ENCODE measurements at regions of chr3 and their contacts with region 1.

Region 1: GRCh38 chr3:186425788-186426730 is 64.0 kb upstream of the DGKG start:
- DNase-seq: peak; percentile 81
- ATAC-seq: peak; percentile 89
- H3K4me3 ChIP-seq: no peak overlapping the region
- H3K27ac ChIP-seq: peak overlapping the region; percentile 60
- H3K4me1 ChIP-seq: peaks cover 30% of the 10 kb centered on the region
- H3K27me3 ChIP-seq: no peaks in the 10 kb centered on the region
- CTCF ChIP-seq: peak; percentile 62

Region 2: GRCh38 chr3:184619369-184619768 is 1806.7 kb before region 1 on chr3:
- CTCF ChIA-PET with region 1: no interaction called
- POLR2A ChIA-PET with region 1: no interaction called
- intact Hi-C with region 1: no loop called
- DNase-seq: no peak
- ATAC-seq: no peak
- H3K4me3 ChIP-seq: no peak overlapping the region
- H3K27ac ChIP-seq: no peak overlapping the region
- H3K4me1 ChIP-seq: peaks cover 6% of the 10 kb centered on the region
- H3K27me3 ChIP-seq: peaks cover 7% of the 10 kb centered on the region
- CTCF ChIP-seq: no peak

Region 3: DNA sequence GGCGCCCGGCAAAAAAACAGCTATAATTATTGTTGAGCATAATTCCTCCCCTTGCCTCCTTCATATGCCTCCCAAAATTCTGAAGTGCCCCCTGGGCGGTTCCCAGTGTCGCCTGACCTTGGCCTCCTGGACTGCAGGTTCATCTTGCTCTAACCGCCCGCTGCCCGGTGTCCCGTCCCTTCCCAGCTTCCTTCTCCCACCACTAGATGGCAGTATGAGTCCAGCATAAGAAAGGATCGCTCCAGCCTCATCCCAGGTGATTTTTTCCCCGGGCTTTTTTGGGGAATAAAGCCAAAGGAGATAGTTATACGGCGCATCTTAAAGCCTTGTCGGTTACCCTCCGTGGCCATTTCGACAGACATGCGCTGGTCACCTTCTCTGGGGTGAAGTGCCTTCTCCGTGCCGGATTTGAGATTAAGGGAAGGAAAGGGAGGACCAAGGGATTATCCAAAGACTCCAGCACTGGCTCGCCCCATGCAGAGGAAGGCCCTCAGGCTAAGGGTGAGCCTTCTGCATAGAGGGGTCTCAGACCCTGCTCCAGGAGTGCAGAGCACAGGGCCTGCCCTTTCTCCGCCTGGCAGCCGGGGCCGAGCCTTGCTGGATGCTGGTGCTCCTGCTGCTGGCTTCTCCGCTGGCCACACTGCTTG is 442.4 kb before region 1 on chr3:
- CTCF ChIA-PET with region 1: no interaction called
- POLR2A ChIA-PET with region 1: no interaction called
- intact Hi-C with region 1: no loop called
- DNase-seq: peak; percentile 89
- ATAC-seq: peak; percentile 99
- H3K4me3 ChIP-seq: peak overlapping the region; percentile 48
- H3K27ac ChIP-seq: no peak overlapping the region
- H3K4me1 ChIP-seq: peaks cover 14% of the 10 kb centered on the region
- H3K27me3 ChIP-seq: no peaks in the 10 kb centered on the region
- CTCF ChIP-seq: peak; percentile 97

Region 4: GRCh38 chr3:186277268-186277909 is 148.7 kb before region 1 on chr3:
- CTCF ChIA-PET with region 1: interaction called, 12 read pairs
- POLR2A ChIA-PET with region 1: no interaction called
- intact Hi-C with region 1: no loop called
- DNase-seq: peak; percentile 56
- ATAC-seq: peak; percentile 66
- H3K4me3 ChIP-seq: no peak overlapping the region
- H3K27ac ChIP-seq: no peak overlapping the region
- H3K4me1 ChIP-seq: peaks cover 17% of the 10 kb centered on the region
- H3K27me3 ChIP-seq: no peaks in the 10 kb centered on the region
- CTCF ChIP-seq: peak; percentile 57

Region 5: DNA sequence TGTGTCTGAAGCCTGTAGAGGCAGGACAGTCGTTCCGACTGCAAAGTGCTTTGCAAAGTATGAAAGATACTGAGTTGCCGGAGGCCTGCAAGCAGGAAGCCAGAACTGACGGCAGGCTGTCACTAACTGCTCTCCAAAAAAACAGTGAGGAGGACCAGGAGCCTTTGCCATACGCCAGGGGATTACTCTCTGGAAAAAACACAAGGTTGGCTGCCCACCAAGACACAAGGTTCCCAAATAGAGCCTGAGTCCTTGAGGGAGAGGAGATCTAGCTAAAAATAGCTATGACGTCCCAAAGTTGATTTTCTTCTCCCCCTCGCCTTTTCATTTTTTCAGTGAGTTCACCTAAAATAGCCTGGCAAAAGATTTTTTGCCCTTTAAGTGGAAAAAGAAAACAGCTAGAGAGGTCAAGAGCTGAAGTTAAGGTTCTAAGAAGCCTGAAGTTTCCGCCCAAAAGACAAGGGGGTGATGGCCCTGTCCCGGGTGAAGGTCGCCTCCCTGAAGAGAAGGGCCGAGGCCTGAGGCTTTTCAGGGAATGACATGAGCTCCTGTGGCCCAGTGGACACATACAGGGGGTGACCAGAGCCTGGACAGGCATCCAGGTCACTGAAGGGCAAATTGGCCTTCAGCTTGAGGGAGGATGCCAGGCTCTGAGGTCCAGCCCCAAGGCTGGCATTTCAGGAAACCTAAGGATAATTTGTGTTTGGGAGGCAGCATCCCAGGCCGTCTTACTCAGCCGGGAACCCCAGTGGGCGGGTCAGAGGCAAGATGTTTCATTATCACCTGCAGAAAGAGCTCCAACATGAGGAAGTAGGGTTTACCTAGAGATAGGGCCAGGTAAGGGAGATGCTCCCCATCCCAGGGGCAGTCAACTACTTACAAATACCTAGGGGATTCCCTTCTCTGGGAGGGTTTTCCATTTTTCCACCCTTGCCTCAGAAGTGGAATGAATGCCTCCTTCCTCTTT is 19.1 kb before region 1 on chr3:
- CTCF ChIA-PET with region 1: no interaction called
- POLR2A ChIA-PET with region 1: no interaction called
- intact Hi-C with region 1: no loop called
- DNase-seq: no peak
- ATAC-seq: no peak
- H3K4me3 ChIP-seq: no peak overlapping the region
- H3K27ac ChIP-seq: no peak overlapping the region
- H3K4me1 ChIP-seq: peaks cover 6% of the 10 kb centered on the region; the same call in 1 of the 2 replicates
- H3K27me3 ChIP-seq: no peaks in the 10 kb centered on the region
- CTCF ChIP-seq: no peak

Region 6: GRCh38 chr3:186452517-186452916 is 26.5 kb after region 1 on chr3:
- CTCF ChIA-PET with region 1: no interaction called
- POLR2A ChIA-PET with region 1: no interaction called
- intact Hi-C with region 1: loop called (anchors 2 kb)
- DNase-seq: peak; percentile 95
- ATAC-seq: peak; percentile 95
- H3K4me3 ChIP-seq: no peak overlapping the region
- H3K27ac ChIP-seq: peak overlapping the region; percentile 77
- H3K4me1 ChIP-seq: peaks cover 23% of the 10 kb centered on the region
- H3K27me3 ChIP-seq: no peaks in the 10 kb centered on the region
- CTCF ChIP-seq: no peak

Region 7: DNA sequence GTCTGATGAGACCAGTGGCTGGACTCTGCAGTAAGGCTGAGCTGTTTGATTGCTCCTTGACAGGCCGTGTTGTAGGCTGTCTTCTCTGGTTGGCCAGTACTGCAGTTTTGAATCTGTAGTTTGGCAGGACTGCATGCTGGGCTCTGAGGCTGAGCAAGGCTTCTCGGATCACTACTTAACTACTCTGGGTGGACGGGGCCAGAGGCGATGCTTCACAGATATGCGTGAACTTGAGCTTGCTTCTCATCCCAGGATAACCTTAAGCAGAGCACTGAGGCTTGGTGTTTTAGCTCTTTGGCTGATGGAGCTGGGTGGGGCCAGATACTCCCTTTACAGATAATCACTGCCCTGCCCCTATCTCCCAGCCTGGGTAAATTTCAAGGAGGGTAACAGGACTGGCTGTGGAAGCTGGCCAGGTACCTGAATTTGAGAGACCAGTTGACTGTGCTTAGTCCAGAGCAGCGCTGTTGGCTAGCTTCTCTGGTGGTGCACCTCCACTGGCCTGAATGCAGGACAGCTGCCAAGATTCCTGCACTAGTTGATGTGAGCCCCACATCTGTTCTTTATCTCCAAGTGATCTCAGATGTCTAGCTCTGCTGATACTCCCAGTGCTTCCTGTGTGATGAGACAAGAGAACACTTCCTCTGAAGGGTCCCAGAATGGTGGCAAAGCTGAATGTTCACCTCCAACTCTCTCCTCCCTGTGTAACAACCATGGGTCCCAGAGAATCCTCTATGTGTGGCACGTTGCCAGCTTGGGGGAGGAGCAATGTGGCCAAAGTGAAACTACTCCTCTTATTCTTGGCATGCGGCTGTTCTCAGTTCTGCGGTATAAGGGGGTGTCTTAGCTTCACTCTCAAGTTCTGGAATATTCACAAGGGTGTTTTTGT is 675.4 kb after region 1 on chr3:
- CTCF ChIA-PET with region 1: no interaction called
- POLR2A ChIA-PET with region 1: no interaction called
- intact Hi-C with region 1: no loop called
- DNase-seq: no peak
- ATAC-seq: no peak
- H3K4me3 ChIP-seq: no peak overlapping the region
- H3K27ac ChIP-seq: no peak overlapping the region
- H3K4me1 ChIP-seq: peaks cover 8% of the 10 kb centered on the region; the same call in 1 of the 2 replicates
- H3K27me3 ChIP-seq: no peaks in the 10 kb centered on the region
- CTCF ChIP-seq: no peak

Measured in PC-3 (cell line).